B cell (primary cell): ENCODE measurements at regions of chr12 and their contacts with region 1.

Region 1: GRCh38 chr12:111444925-111445725 is 39.4 kb downstream of the SH2B3 start:
- DNase-seq: peak; percentile 95
- ATAC-seq: peak; percentile 96
- H3K4me3 ChIP-seq: no peak overlapping the region
- H3K4me3 Mint-ChIP-seq: peak overlapping the region; percentile 55
- H3K27ac ChIP-seq: peak overlapping the region; percentile 79 to 89
- H3K27ac Mint-ChIP-seq: peak overlapping the region; percentile 83
- H3K4me1 ChIP-seq: peaks cover 35 to 80% of the 10 kb centered on the region in 2 donors
- H3K4me1 Mint-ChIP-seq: peaks cover 76% of the 10 kb centered on the region
- H3K27me3 ChIP-seq: no peaks in the 10 kb centered on the region
- H3K27me3 Mint-ChIP-seq: no peaks in the 10 kb centered on the region
- CTCF ChIP-seq: peak; percentile 25

Region 2: DNA sequence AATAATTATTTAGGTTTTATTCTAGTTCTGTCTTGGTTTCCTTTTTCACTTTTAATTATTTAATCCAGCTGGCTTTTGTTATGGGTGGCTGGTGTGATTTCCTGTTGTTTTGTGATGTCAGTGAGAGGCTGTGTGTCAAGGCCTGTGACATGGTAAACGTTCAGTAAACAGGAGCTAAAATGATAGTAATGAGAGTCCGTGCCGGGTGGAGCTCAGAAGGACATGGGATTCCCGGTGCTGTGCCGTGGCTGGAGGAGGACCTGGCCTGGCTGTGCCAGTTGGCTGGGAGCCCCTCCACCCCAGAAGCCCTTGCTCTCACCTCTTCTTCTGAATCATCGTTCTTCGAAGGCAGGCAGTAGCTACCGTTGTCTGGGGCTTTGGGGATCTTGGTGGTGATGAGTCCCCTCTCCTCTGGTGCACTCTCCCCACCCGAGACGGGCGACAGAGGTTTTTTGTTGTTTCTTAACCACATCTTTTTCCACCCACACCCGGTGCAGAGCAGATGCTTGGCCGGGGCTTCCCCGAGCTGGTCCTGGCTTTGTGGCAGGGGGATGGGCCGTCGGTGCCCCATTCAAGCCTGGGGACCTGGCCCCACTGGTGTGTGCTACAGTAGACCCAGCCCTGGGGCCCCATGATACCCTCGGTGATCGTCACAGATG is 10.3 kb before region 1 on chr12:
- CTCF ChIA-PET with region 1: interaction called, 63 read pairs
- POLR2A ChIA-PET with region 1: interaction called, 42 read pairs
- intact Hi-C with region 1: loop called (anchors 1 kb)
- DNase-seq: peak; percentile 92
- ATAC-seq: peak; percentile 76
- H3K4me3 ChIP-seq: peak overlapping the region; percentile 5 to 65 (median 43)
- H3K4me3 Mint-ChIP-seq: peak overlapping the region; percentile 92
- H3K27ac ChIP-seq: peak overlapping the region; percentile 96 to 97
- H3K27ac Mint-ChIP-seq: peak overlapping the region; percentile 99
- H3K4me1 ChIP-seq: peaks cover 88 to 98% of the 10 kb centered on the region in 2 donors
- H3K4me1 Mint-ChIP-seq: peaks cover 90% of the 10 kb centered on the region
- H3K27me3 ChIP-seq: no peaks in the 10 kb centered on the region
- H3K27me3 Mint-ChIP-seq: no peaks in the 10 kb centered on the region
- CTCF ChIP-seq: no peak

Region 3: DNA sequence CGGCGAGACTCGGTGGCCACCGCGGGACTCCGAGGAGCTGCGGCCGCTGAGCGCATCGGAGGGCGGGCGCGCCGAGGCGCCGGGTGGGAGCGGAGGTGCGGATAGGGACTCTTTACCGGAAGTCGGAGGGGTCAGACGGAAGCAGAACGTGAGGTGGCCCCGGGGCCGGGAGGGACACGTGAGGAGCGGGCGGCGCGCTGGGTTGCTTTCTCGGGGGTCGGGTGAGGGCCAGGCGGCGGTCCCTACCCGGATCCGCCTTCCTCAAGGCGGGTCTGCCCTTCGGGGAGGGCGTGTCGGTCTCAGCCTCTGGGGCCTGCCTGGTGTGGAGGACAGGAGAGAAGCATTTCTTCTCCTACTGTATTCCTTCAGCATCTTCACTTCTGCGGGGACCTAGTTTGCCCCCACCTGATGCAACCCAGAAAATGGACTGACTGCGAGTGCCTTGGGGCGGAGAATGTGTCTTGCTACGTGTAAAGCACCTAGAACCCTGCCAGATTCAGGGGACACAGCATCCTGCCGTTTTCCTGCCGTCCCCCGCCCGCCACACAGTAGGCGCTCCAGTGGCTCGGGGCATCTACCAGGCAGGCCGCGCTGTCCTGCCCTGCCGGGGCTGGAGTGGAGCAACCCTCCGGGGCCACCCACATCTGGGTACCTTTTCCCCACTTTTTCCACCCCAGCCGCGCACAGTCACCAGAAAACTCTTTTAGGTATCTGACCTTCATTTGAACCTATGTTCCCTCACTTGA is 154.5 kb after region 1 on chr12:
- CTCF ChIA-PET with region 1: interaction called, 3 read pairs
- POLR2A ChIA-PET with region 1: no interaction called
- intact Hi-C with region 1: loop called (anchors 2 kb)
- DNase-seq: peak; percentile 97
- ATAC-seq: peak; percentile 77
- H3K4me3 ChIP-seq: peak overlapping the region; percentile 60 to 92 (median 85)
- H3K4me3 Mint-ChIP-seq: peak overlapping the region; percentile 90
- H3K27ac ChIP-seq: peak overlapping the region; percentile 75 to 87
- H3K27ac Mint-ChIP-seq: peak overlapping the region; percentile 96
- H3K4me1 ChIP-seq: peaks cover 15% of the 10 kb centered on the region in 2 donors
- H3K4me1 Mint-ChIP-seq: peaks cover 28% of the 10 kb centered on the region
- H3K27me3 ChIP-seq: no peaks in the 10 kb centered on the region
- H3K27me3 Mint-ChIP-seq: no peaks in the 10 kb centered on the region
- CTCF ChIP-seq: no peak